ENCODE measurements at regions of chr6 and their contacts with region 1.

Region 1: DNA sequence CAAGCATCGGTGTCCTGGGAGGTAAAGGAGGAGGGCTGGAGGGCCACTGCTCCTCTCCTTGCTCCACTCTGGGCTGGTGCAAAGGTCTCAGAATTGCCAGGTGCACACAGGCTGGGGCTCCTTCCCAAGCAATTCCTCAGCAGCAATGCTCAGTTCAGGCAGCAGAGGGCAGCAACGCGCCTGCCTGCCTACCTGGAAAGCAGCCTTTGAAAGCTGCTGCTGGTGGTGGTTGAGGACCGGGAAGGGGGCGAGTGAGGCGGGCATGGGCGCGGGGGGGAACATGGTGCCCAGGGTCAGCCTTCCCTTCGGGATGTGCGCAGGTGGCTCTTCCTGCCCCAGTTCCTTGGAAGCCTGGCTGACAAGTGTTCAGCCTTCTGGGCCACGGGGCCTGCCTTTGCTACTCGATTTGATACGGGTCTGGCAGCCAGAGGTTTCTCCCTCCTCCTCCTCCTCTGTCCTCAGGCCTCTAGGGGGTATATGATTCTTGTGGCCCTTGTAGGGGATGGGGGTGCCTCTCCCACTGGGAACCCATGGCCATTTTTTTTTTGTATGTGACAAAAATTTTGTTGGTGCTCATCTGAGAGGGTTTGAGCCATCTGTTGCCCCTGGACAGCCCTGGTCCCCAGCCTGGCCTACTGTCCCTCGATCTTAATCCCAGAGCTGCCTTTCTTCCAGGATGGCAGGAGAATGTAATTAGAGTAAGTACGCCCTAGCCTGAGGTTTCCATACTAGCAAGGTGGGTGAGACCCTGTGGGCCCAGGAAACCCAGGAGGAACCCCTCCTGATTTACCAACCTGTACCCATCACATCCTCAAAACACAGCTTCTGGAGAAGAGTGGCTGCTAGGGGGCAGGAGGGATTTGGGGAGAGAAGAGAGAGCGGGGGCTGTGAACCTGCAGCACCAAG is 20.1 kb downstream of the MRPS18A start:
- DNase-seq: peak; percentile 73 to 91
- ATAC-seq: peak; percentile 72

Region 2: GRCh38 chr6:43753570-43754184 is 86.2 kb after region 1 on chr6:
- intact Hi-C with region 1: loop called in 1 of 2 experiments (anchors 5 kb)
- DNase-seq: no peak
- ATAC-seq: no peak

Region 3: GRCh38 chr6:44086931-44087574 is 419.6 kb after region 1 on chr6:
- intact Hi-C with region 1: loop called in 1 of 2 experiments (anchors 10 kb)
- DNase-seq: peak in 1 of 2 donors; percentile 54
- ATAC-seq: peak; percentile 58